ENCODE measurements at regions of chr12 and their contacts with region 1.

Region 1: DNA sequence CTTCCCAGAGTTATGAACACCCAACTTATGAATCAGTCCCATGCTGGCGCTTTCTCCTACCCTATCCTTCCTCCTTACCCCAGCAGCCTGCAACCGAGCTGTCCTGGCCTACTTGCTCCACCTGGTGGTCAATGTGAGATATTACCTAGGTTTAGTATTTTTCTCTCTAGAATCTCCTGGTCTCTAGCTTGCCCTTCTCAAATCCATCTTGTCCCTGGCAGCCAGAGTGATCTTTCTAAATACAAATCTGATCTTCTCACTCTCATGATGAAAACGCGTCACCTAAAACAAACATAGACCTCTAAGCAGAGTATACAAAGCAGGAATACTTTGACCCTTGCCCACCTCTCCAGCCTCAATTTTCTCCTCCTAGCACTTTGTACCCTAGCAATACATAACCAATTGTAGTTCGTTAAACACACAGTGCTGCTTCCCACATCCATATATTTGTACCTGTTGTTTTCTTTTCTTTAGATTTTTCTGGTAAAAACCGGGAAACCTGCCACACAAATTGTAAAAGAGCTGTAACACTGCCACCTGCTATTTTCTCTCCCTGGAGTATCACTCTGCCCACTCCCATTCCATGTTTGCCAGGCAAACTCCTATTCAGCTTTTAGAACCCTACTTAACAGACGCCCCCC is 20.0 kb upstream of the TCP11L2 start:
- DNase-seq: peak in 4 of 6 donors; percentile 43 to 68 (median 55)
- ATAC-seq: peak; percentile 87 to 96 (median 93)
- H3K4me3 ChIP-seq: no peak overlapping the region
- H3K27ac ChIP-seq: no peak overlapping the region
- H3K4me1 ChIP-seq: peaks cover 0 to 9% (median 8%) of the 10 kb centered on the region in 3 donors
- H3K27me3 ChIP-seq: no peaks in the 10 kb centered on the region
- CTCF ChIP-seq: peak; percentile 52 to 79 (median 60)

Region 2: DNA sequence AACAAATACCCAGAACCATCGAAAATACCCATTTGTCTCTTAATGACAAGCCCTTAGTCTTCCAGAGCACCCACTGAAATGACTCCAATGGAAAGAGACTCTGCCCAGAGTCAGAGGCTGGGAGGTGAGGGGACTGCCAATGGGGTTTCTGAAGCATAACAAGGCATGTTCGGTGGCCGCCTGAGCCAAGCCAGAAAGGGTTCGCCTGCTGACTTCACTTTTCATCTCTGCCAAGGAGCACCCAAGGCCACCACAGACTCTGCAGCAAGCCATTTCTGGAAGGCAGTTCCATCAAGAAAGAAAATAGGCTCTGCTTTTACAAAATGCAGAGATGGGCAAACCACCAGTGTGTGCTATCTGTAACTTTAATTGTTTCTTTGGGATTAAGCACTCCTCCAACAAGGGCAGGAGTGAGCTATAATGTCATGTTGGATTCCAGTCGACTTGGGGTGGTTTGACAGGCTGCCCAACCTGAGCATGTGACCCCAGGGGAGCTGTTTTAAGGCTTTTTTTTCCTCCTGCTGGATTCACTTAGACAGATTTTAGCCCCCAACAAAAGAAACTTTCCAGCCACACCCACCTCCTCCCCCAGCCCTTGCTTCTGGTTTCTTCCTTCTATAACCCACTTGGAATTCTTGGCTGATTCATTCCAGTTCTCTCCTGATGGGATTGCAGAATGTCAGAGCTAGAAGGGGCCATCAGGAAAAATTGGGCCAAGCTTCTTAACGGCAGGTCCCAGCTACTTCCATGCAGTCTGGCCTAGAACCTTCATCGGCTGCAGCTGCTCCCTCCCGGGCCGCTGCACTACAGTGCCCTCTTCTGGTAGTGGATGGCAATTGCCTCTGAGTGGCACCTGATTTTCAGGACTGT is 58.9 kb before region 1 on chr12:
- intact Hi-C with region 1: loop called in 2 of 3 experiments (anchors 5 kb)
- DNase-seq: peak; percentile 42 to 83 (median 74)
- ATAC-seq: peak; percentile 88 to 96 (median 89)
- H3K4me3 ChIP-seq: no peak overlapping the region
- H3K27ac ChIP-seq: no peak overlapping the region
- H3K4me1 ChIP-seq: peaks cover 0 to 3% (median 0%) of the 10 kb centered on the region in 3 donors
- H3K27me3 ChIP-seq: no peaks in the 10 kb centered on the region
- CTCF ChIP-seq: peak; percentile 82 to 97 (median 94)

Measured in pancreas (tissue), 10 donors.